ENCODE measurements at regions of chr5 and their contacts with region 1.

Region 1: GRCh38 chr5:112146323-112147226 is 272.5 kb downstream of the EPB41L4A start:
- DNase-seq: peak; percentile 77
- H3K27ac ChIP-seq: no peak overlapping the region
- CTCF ChIP-seq: peak; percentile 95

Region 2: DNA sequence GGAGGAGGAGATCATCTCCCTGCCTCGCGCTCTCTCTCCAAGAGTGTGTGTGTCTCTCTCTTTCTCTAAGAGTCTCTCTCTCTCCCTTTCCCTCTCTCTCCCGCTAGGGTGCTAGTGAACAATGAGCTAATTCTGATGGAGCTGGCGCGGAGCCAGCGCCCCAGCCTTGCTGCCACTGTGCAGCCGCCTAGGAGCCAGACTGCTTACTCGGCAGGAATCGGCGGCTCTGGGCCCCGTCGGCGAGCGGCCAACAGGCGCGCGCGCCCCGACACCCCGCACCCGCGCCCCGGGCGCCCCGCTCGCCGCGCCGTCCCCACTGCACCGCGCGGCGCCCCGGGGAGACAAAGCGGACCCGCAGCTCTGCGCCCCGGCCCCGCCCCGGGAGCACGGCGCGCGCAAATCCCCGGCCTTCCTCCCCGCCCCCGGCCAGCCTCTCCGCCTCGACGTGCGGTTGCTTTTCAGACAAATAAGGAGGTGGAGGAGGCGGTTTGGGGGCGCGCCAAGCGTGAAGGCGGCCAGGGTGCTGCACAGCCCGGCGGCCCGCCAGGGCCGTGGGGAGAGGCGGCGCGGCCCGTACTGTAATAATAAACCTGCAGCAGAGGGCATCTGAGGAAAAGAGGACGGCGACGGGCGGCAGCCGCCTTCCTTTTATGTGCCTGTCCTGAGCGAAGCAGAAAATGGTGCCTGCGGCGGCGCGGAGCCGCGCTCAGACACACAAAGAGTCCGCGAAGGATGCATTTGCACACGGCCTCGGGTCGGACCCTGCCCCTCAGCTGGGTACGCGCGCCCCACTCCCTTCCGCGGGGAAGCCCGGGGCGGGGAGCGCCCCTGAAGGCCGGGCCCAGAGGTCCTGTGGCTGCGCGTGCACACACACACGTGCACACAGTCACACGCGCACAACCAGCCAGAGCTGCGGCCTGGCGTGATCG is 389.0 kb before region 1 on chr5:
- CTCF ChIA-PET with region 1: interaction called, 10 read pairs
- POLR2A ChIA-PET with region 1: no interaction called
- DNase-seq: peak; percentile 93
- H3K27ac ChIP-seq: peak overlapping the region; percentile 97
- CTCF ChIP-seq: peak; percentile 33; the same call in 1 of the 2 replicates

Region 3: DNA sequence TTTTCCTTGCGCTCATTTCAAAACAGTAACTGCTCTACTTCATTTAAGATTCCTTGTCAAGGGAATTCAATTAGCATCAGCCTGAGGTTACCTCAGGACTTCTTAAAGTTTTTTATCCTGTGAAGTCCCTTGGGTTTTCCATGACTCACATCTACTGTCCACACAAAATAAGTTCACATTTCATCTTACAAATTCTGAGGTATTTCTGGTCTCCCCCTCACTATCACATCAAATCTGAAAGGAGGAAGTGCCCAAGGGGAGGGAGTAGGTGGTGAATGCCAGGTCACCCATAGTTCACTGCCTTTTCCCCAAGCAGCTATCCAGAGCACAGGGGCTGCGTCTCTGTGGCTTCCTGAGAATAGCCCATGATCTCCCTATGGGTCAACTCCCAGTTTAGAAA is 162.5 kb before region 1 on chr5:
- CTCF ChIA-PET with region 1: no interaction called
- POLR2A ChIA-PET with region 1: no interaction called
- DNase-seq: peak; percentile 36
- H3K27ac ChIP-seq: no peak overlapping the region
- CTCF ChIP-seq: no peak

Region 4: DNA sequence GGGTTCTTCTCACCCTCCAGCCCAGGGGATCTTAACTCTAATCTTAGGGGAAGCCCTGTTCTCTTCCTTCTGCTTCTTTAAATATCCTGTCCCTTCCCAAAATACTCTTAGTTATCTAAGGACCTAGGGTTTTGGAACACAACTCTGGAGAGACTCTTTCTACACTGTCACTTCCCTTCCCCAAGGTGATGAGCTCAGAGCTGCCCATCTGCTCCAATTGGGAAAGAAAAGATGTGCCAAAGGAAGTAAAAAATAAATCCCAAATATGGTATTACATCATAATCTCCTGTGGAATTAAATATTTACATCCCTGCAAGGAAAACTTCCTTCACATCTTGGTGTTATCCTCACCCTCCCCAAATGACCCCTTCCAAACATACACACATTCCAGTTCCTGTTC is 18.7 kb before region 1 on chr5:
- CTCF ChIA-PET with region 1: no interaction called
- POLR2A ChIA-PET with region 1: no interaction called
- DNase-seq: no peak
- H3K27ac ChIP-seq: no peak overlapping the region
- CTCF ChIP-seq: no peak

Measured in RWPE1 (cell line).